ENCODE measurements at regions of chr17 and their contacts with region 1.

Region 1: GRCh38 chr17:79087428-79088143 is 13.0 kb downstream of the ENGASE start:
- DNase-seq: peak; percentile 68 to 96
- ATAC-seq: peak; percentile 70 to 90
- H3K4me3 ChIP-seq: no peak overlapping the region
- H3K27ac ChIP-seq: no peak overlapping the region
- H3K4me1 ChIP-seq: no peaks in the 10 kb centered on the region
- CTCF ChIP-seq: peak; percentile 95
- EP300 ChIP-seq: no peak
- POLR2A ChIP-seq: no peak
- RAD21 ChIP-seq: peak; percentile 88 to 89

Region 2: GRCh38 chr17:79036596-79036995 is 51.0 kb before region 1 on chr17:
- CTCF ChIA-PET with region 1: interaction called, 26 read pairs
- POLR2A ChIA-PET with region 1: no interaction called
- DNase-seq: peak; percentile 75 to 87
- ATAC-seq: peak; percentile 70 to 72
- H3K4me3 ChIP-seq: no peak overlapping the region
- H3K27ac ChIP-seq: peak overlapping the region; percentile 80 to 89
- H3K4me1 ChIP-seq: peaks cover 48% of the 10 kb centered on the region
- CTCF ChIP-seq: no peak
- EP300 ChIP-seq: no peak
- POLR2A ChIP-seq: no peak
- RAD21 ChIP-seq: no peak

Region 3: DNA sequence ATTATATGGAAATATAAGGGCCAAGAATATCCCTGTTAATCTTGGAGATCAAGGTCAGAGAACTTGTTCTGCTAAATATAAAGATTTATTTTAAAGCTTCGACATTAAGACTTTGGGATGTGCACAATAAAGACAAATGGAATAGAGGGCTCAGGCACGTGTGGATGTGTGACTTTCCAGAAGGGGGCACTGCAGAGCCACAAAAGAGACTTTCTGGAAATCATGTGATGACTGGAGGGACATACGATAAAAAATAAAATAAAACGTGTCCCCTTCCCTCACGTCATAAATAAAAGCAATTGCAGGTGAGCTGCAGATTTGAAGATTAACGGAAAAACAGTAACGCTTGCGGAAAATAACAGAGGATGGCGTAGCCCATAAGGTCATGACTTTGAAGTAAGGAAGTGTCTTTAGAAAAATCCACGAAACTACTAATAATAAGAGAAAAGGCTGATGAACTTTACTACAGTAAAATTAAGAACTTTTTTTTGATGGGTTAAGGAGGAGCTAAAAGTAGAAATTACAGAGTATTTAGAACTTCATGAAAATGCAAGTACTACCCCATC is 22.4 kb before region 1 on chr17:
- CTCF ChIA-PET with region 1: interaction called, 147 read pairs
- POLR2A ChIA-PET with region 1: no interaction called
- DNase-seq: peak; percentile 57 to 73
- ATAC-seq: peak; percentile 64 to 81; a peak in 5 of 6 replicates
- H3K4me3 ChIP-seq: no peak overlapping the region
- H3K27ac ChIP-seq: no peak overlapping the region
- H3K4me1 ChIP-seq: no peaks in the 10 kb centered on the region
- CTCF ChIP-seq: peak; percentile 80
- EP300 ChIP-seq: no peak
- POLR2A ChIP-seq: no peak
- RAD21 ChIP-seq: peak; percentile 69 to 76

Region 4: GRCh38 chr17:79109570-79109969 is 22.0 kb after region 1 on chr17:
- CTCF ChIA-PET with region 1: interaction called, 52 read pairs
- POLR2A ChIA-PET with region 1: no interaction called
- DNase-seq: peak in 1 of 2 experiments; percentile 50
- ATAC-seq: peak in 1 of 2 experiments; percentile 74; a peak in 3 of 6 replicates
- H3K4me3 ChIP-seq: no peak overlapping the region
- H3K27ac ChIP-seq: no peak overlapping the region
- H3K4me1 ChIP-seq: no peaks in the 10 kb centered on the region
- CTCF ChIP-seq: peak; percentile 50
- EP300 ChIP-seq: no peak
- POLR2A ChIP-seq: no peak
- RAD21 ChIP-seq: peak; percentile 22 to 41; a peak in 2 of 5 replicates

Region 5: GRCh38 chr17:79174905-79175856 is 87.6 kb after region 1 on chr17:
- CTCF ChIA-PET with region 1: interaction called, 10 read pairs
- POLR2A ChIA-PET with region 1: no interaction called
- DNase-seq: peak in 1 of 2 experiments; percentile 24
- ATAC-seq: peak; percentile 44 to 49; a peak in 4 of 6 replicates
- H3K4me3 ChIP-seq: no peak overlapping the region
- H3K27ac ChIP-seq: peak overlapping the region in 1 of 2 experiments; percentile 28; a peak in 1 of 6 replicates
- H3K4me1 ChIP-seq: peaks cover 11% of the 10 kb centered on the region; the same call in 1 of the 3 replicates
- CTCF ChIP-seq: no peak
- EP300 ChIP-seq: no peak
- POLR2A ChIP-seq: no peak
- RAD21 ChIP-seq: no peak

Region 6: DNA sequence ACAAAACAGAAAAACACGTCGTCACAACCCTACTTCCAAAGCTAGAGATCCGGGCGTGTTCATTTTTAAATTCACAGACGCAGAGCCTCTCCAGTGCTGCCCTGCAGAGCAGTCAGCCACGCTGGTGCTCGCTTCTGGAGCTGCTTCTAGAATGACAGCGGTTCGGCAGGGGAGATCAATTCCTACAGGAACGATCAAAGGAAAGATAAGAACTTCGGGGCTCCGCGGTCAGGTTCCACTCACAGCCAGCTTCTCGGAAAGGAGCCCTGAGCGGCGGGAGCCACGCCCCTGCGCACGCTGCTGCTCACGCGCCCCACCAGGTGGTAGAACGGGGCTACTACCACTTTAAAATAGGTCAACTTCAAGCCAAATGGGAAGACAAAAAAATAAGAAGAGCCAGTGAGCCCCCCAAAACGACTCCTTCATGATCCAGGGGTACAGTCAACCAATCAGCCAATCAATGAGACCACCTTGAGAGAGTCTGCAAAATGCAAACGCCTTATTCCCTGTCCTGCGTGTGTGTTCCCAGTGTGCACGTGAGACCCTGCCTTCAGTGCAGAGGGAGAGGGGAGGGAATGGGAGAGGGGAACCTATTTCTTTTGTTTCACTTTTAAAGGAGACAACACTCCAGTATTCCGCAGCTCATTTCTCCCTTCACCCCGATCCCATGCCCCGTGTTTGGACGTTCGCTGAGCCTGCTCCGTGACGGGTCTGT is 313.6 kb after region 1 on chr17:
- CTCF ChIA-PET with region 1: interaction called, 555 read pairs
- POLR2A ChIA-PET with region 1: no interaction called
- DNase-seq: peak; percentile 69 to 94
- ATAC-seq: peak; percentile 71 to 89
- H3K4me3 ChIP-seq: peak overlapping the region; percentile 29
- H3K27ac ChIP-seq: peak overlapping the region; percentile 64 to 83
- H3K4me1 ChIP-seq: peaks cover 24% of the 10 kb centered on the region
- CTCF ChIP-seq: peak; percentile 81
- EP300 ChIP-seq: no peak
- POLR2A ChIP-seq: no peak
- RAD21 ChIP-seq: peak; percentile 53 to 57